ENCODE measurements at regions of chr4 and their contacts with region 1.

Region 1: DNA sequence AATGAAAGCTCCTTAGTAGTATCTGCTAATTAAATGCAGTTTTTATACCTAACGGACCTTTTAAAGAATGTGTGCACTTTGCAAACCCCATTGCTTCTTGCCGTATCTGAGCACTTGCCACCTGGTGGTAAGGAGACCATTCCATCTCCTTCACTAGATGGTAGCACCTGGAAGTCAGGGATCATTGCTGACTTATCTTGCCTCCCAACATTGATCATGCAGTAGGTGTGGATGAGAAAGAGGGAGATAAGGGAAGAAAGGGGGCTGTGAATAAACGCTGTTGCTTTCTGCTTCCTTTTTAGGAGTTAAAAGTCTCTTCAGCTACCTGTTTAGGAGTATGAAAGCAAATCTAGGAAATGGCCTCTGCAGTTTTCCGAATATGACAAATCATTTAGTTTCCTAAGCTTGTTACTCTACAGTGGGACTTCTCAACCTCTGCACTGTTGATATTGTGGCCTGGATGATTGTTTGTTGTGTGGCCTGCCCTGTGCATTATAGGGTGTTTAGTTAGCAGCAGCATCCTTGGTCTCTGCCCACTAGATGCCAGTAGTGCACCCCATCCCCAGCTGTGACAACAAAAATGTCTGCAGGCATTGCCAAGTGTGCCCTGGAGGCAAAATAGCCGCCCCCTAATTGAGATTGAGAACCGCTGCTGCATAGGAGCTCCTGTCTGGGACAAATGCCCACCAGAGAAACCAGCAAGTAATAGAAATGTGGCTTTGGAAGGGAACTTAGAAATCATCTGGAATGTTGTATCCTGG is 38.8 kb downstream of the GAB1 start:
- DNase-seq: no peak
- ATAC-seq: peak; percentile 82
- H3K4me3 ChIP-seq: no peak overlapping the region
- H3K27ac ChIP-seq: no peak overlapping the region
- H3K4me1 ChIP-seq: peaks cover 8% of the 10 kb centered on the region
- H3K27me3 ChIP-seq: no peaks in the 10 kb centered on the region
- CTCF ChIP-seq: peak; percentile 50
- POLR2A ChIP-seq: no peak
- RAD21 ChIP-seq: peak; percentile 59

Region 2: GRCh38 chr4:143302536-143302935 is 73.0 kb before region 1 on chr4:
- CTCF ChIA-PET with region 1: no interaction called
- POLR2A ChIA-PET with region 1: no interaction called
- dilution Hi-C with region 1: no loop called
- in situ Hi-C with region 1: no loop called
- intact Hi-C with region 1: no loop called
- DNase-seq: peak; percentile 13
- ATAC-seq: peak; percentile 53; the same call in 1 of the 2 replicates
- H3K4me3 ChIP-seq: no peak overlapping the region
- H3K27ac ChIP-seq: no peak overlapping the region
- H3K4me1 ChIP-seq: peaks cover 1% of the 10 kb centered on the region; the same call in 1 of the 2 replicates
- H3K27me3 ChIP-seq: no peaks in the 10 kb centered on the region
- CTCF ChIP-seq: no peak
- POLR2A ChIP-seq: no peak
- RAD21 ChIP-seq: no peak

Region 3: GRCh38 chr4:143359644-143360193 is 15.8 kb before region 1 on chr4:
- CTCF ChIA-PET with region 1: no interaction called
- POLR2A ChIA-PET with region 1: no interaction called
- dilution Hi-C with region 1: no loop called
- in situ Hi-C with region 1: no loop called
- intact Hi-C with region 1: loop called (anchors 2 kb)
- DNase-seq: no peak
- ATAC-seq: no peak
- H3K4me3 ChIP-seq: no peak overlapping the region
- H3K27ac ChIP-seq: peak overlapping the region; percentile 33; the same call in 1 of the 2 replicates
- H3K4me1 ChIP-seq: peaks cover 20% of the 10 kb centered on the region
- H3K27me3 ChIP-seq: no peaks in the 10 kb centered on the region
- CTCF ChIP-seq: no peak
- POLR2A ChIP-seq: no peak
- RAD21 ChIP-seq: no peak

Region 4: GRCh38 chr4:143882892-143883291 is 507.4 kb after region 1 on chr4:
- CTCF ChIA-PET with region 1: no interaction called
- POLR2A ChIA-PET with region 1: no interaction called
- dilution Hi-C with region 1: no loop called
- in situ Hi-C with region 1: no loop called
- intact Hi-C with region 1: no loop called
- DNase-seq: no peak
- ATAC-seq: no peak
- H3K4me3 ChIP-seq: no peak overlapping the region
- H3K27ac ChIP-seq: no peak overlapping the region
- H3K4me1 ChIP-seq: no peaks in the 10 kb centered on the region
- H3K27me3 ChIP-seq: no peaks in the 10 kb centered on the region
- CTCF ChIP-seq: no peak
- POLR2A ChIP-seq: no peak
- RAD21 ChIP-seq: no peak

Measured in IMR-90 (cell line).